ENCODE measurements at regions of chr21 and their contacts with region 1.

Region 1: DNA sequence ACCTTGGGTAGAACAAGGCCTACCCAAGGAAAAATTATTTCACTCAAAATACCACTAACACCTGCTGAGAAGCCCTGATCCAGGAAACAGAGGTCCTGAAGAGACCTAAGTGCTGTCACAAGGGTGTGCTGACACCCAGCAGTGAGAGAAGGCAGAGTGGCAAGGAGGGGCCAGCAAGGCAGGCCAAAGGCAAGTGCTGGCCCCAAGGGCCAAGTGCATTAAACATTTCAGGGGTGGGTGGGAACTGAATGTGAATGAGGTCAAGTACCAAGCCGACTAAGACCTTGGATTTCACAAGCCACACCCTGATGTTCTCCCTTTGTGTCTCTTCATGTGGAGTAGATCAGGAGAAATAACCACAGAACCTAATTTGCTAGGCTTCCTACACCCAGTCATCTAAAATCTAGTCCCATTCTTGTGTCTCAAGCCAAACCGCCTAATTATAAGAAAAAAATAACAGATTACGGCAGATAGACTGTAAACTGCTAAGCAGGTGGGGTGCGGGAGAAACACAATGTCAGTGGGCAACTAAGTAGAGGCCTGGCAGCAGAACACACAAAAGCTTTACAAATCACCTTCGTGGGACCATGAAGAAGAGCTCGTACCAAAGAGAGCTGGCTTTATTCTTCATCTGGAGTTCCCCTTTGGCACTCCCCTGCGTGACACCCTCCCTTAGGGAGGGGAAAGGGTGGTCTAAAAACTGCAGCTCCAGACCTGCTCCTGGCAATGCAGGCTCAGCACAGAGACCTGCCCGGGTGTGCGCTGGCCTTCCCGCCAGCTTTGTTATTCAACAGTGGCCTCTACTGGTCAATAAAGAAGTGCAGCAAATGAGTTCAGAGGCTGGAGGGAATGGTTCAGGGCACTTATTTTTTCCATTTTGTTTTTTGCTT is 8.7 kb downstream of the UBE2G2 start:
- DNase-seq: peak; percentile 58
- H3K4me3 Mint-ChIP-seq: no peak overlapping the region
- H3K27ac Mint-ChIP-seq: peak overlapping the region; percentile 23
- H3K4me1 Mint-ChIP-seq: peaks cover 9% of the 10 kb centered on the region
- H3K27me3 Mint-ChIP-seq: no peaks in the 10 kb centered on the region
- CTCF ChIP-seq: peak; percentile 68

Region 2: GRCh38 chr21:44767871-44768831 is 24.8 kb before region 1 on chr21:
- CTCF ChIA-PET with region 1: interaction called, 10 read pairs
- POLR2A ChIA-PET with region 1: no interaction called
- intact Hi-C with region 1: no loop called
- DNase-seq: no peak
- H3K4me3 Mint-ChIP-seq: no peak overlapping the region
- H3K27ac Mint-ChIP-seq: no peak overlapping the region
- H3K4me1 Mint-ChIP-seq: peaks cover 17% of the 10 kb centered on the region
- H3K27me3 Mint-ChIP-seq: no peaks in the 10 kb centered on the region
- CTCF ChIP-seq: no peak

Region 3: GRCh38 chr21:44779417-44780136 is 13.4 kb before region 1 on chr21:
- CTCF ChIA-PET with region 1: interaction called, 49 read pairs
- POLR2A ChIA-PET with region 1: interaction called, 5 read pairs
- intact Hi-C with region 1: no loop called
- DNase-seq: no peak
- H3K4me3 Mint-ChIP-seq: no peak overlapping the region
- H3K27ac Mint-ChIP-seq: no peak overlapping the region
- H3K4me1 Mint-ChIP-seq: peaks cover 15% of the 10 kb centered on the region
- H3K27me3 Mint-ChIP-seq: no peaks in the 10 kb centered on the region
- CTCF ChIP-seq: no peak

Measured in MCF 10A (cell line).